PC-3 (cell line): ENCODE measurements at regions of chr10 and their contacts with region 1.

Region 1: DNA sequence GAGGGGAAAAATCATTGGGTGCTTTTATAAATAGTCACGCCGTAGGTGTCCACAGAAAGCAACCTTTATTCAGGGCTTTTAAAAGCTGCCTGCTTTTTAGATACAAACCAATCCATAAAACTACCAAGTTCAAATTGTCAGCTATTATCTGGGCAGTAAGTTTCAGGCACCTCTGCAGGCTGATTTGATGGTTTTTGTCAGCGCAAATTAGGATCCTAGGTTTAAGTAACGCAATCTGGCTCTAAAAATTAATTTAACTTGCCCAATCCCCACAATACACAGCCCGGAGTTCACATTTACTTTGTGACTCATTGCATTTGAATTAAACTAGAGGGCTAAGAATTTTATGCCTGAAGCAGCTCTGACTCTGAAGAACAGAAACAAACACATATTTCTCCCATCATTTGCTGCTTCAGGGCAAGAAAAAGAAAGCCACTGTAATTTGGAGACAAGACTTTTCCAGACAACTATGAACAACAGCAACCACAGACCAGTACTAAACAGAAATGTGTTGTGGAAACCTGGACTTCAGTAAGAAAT is 43.3 kb downstream of the NRP1 start:
- DNase-seq: peak; percentile 100
- ATAC-seq: peak; percentile 78
- H3K4me3 ChIP-seq: peak overlapping the region; percentile 16
- H3K27ac ChIP-seq: peak overlapping the region; percentile 60
- H3K4me1 ChIP-seq: peaks cover 78% of the 10 kb centered on the region
- H3K27me3 ChIP-seq: no peaks in the 10 kb centered on the region
- CTCF ChIP-seq: no peak

Region 2: GRCh38 chr10:33199731-33200232 is 91.3 kb before region 1 on chr10:
- CTCF ChIA-PET with region 1: no interaction called
- POLR2A ChIA-PET with region 1: no interaction called
- intact Hi-C with region 1: loop called (anchors 1 kb)
- DNase-seq: peak; percentile 98
- ATAC-seq: peak; percentile 57
- H3K4me3 ChIP-seq: no peak overlapping the region
- H3K27ac ChIP-seq: peak overlapping the region; percentile 26
- H3K4me1 ChIP-seq: peaks cover 57% of the 10 kb centered on the region
- H3K27me3 ChIP-seq: no peaks in the 10 kb centered on the region
- CTCF ChIP-seq: no peak

Region 3: GRCh38 chr10:33237736-33238624 is 53.1 kb before region 1 on chr10:
- CTCF ChIA-PET with region 1: no interaction called
- POLR2A ChIA-PET with region 1: no interaction called
- intact Hi-C with region 1: loop called (anchors 1 kb)
- DNase-seq: peak; percentile 100
- ATAC-seq: peak; percentile 94
- H3K4me3 ChIP-seq: peak overlapping the region; percentile 2; the same call in 1 of the 2 replicates
- H3K27ac ChIP-seq: peak overlapping the region; percentile 66
- H3K4me1 ChIP-seq: peaks cover 61% of the 10 kb centered on the region
- H3K27me3 ChIP-seq: no peaks in the 10 kb centered on the region
- CTCF ChIP-seq: no peak

Region 4: GRCh38 chr10:33258967-33259366 is 32.2 kb before region 1 on chr10:
- CTCF ChIA-PET with region 1: interaction called, 3 read pairs
- POLR2A ChIA-PET with region 1: interaction called, 20 read pairs
- intact Hi-C with region 1: loop called (anchors 1 kb)
- DNase-seq: peak; percentile 98
- ATAC-seq: peak; percentile 52
- H3K4me3 ChIP-seq: no peak overlapping the region
- H3K27ac ChIP-seq: peak overlapping the region; percentile 65
- H3K4me1 ChIP-seq: peaks cover 86% of the 10 kb centered on the region
- H3K27me3 ChIP-seq: no peaks in the 10 kb centered on the region
- CTCF ChIP-seq: no peak

Region 5: DNA sequence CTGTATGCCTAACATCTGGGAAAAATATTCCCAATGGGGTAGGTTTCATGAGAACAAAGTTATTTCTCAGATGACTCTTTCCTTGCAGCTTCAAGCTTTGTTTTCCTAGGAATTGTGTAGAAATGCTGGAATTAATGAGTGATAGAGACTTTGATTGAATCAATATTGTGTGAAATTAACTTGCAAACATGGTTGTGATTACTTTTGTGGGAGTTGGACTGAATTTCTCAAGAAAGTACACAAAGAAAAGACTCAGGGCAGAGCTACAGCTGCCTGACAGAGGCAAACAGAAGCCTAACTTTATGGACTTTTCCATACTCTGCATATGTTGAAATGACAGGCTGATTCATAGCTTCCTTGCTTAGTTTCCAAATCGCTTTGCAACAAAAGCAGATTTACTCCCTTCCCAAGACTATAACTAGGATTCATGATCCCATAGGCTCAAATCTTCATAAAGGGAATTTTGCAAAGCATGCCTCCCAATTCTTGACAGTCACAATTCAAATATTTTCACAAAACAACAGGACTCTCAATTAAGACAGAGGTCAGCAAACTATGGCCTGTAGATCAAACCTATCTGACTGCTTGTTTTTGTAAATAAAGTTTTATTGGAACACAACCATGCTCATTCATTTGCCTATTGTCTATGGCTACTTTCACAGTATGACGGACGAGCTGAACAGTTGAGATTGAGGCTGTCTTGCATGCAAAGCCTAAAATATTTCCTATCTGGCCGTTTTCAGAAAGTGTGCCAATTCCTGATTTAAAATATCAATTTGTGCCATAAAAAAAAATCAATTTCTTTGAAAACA is 15.8 kb after region 1 on chr10:
- CTCF ChIA-PET with region 1: no interaction called
- POLR2A ChIA-PET with region 1: interaction called, 4 read pairs
- intact Hi-C with region 1: loop called (anchors 1 kb)
- DNase-seq: peak; percentile 86
- ATAC-seq: peak; percentile 59
- H3K4me3 ChIP-seq: no peak overlapping the region
- H3K27ac ChIP-seq: peak overlapping the region; percentile 52
- H3K4me1 ChIP-seq: peaks cover 21% of the 10 kb centered on the region
- H3K27me3 ChIP-seq: no peaks in the 10 kb centered on the region
- CTCF ChIP-seq: no peak

Region 6: DNA sequence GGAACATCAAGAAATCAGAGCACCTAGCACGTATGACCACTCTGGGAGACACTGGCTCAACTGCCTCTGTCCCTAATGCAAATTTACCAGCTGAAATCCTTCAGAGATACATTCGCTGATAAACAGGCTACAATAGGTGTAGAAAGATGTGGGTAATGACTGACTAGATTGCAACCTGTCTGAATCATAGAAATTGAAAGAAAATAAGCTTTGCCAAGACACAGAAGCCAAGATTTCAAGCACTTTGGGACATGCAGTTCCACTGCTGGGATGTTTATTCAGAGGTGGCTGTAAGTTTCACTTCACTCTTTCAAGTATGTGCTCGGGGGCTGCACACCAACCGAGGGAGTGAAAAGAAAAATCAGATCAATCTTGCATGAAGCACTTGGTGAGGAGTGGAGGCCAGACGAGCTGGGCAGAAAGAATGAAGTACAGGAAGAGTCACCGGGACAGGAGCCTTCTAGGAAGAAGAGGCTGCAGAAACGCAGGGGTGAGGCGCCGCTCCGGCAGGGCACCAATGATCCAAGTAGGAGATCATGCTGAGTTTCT is 1247.2 kb after region 1 on chr10:
- CTCF ChIA-PET with region 1: no interaction called
- POLR2A ChIA-PET with region 1: interaction called, 17 read pairs
- intact Hi-C with region 1: no loop called
- DNase-seq: no peak
- ATAC-seq: no peak
- H3K4me3 ChIP-seq: no peak overlapping the region
- H3K27ac ChIP-seq: no peak overlapping the region
- H3K4me1 ChIP-seq: no peaks in the 10 kb centered on the region
- H3K27me3 ChIP-seq: no peaks in the 10 kb centered on the region
- CTCF ChIP-seq: no peak